PC-3 (cell line): ENCODE measurements at regions of chr3 and their contacts with region 1.

Region 1: GRCh38 chr3:46488735-46489361 is 8.9 kb upstream of the RTP3 start:
- DNase-seq: peak; percentile 98
- ATAC-seq: peak; percentile 96
- H3K4me3 ChIP-seq: no peak overlapping the region; the same call in 1 of the 2 replicates
- H3K27ac ChIP-seq: no peak overlapping the region
- H3K4me1 ChIP-seq: peaks cover 14% of the 10 kb centered on the region
- H3K27me3 ChIP-seq: no peaks in the 10 kb centered on the region
- CTCF ChIP-seq: peak; percentile 100

Region 2: GRCh38 chr3:46423588-46423987 is 65.3 kb before region 1 on chr3:
- CTCF ChIA-PET with region 1: interaction called, 3 read pairs
- POLR2A ChIA-PET with region 1: no interaction called
- intact Hi-C with region 1: loop called (anchors 2 kb)
- DNase-seq: peak; percentile 73
- ATAC-seq: no peak
- H3K4me3 ChIP-seq: no peak overlapping the region
- H3K27ac ChIP-seq: peak overlapping the region; percentile 59
- H3K4me1 ChIP-seq: peaks cover 47% of the 10 kb centered on the region
- H3K27me3 ChIP-seq: no peaks in the 10 kb centered on the region
- CTCF ChIP-seq: no peak

Region 3: DNA sequence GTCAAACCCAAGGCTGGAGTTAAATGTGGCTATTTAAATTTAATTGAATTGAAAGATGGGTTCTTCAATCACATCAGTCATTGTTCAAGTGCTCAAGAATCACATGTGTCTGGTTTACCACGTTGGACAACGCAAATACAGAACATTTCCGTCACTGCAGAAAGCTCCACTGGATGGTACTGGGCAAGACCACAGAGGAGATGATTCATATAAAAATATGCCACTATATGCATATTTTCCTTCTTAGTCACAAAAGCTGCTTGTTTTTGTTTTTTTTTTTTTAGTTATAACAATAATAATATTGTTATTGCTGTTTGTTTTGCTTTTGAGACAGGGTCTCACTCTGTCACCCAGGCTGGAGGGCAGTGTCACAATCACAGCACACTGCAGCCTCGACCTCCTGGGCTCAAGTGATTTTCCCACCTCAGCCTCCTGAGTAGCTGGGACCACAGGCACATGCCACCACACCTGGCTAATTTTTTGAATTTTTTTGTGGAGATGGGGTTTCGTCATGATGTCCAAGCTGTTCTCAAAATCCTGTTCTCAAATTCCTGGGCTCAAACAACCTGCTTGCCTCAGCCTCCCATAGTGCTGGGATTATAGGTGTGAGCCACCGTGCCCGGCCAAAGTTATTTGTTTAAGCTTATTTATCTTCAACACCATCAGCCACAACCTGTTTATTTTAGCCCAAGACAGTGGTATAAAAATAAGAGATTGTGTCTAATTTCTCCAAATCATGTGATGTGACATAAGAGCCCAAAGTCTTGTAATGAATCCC is 28.4 kb after region 1 on chr3:
- CTCF ChIA-PET with region 1: interaction called, 9 read pairs
- POLR2A ChIA-PET with region 1: no interaction called
- intact Hi-C with region 1: loop called (anchors 1 kb)
- DNase-seq: peak; percentile 97
- ATAC-seq: peak; percentile 98
- H3K4me3 ChIP-seq: peak overlapping the region; percentile 29; the same call in 1 of the 2 replicates
- H3K27ac ChIP-seq: peak overlapping the region; percentile 90
- H3K4me1 ChIP-seq: peaks cover 23% of the 10 kb centered on the region
- H3K27me3 ChIP-seq: no peaks in the 10 kb centered on the region
- CTCF ChIP-seq: no peak

Region 4: DNA sequence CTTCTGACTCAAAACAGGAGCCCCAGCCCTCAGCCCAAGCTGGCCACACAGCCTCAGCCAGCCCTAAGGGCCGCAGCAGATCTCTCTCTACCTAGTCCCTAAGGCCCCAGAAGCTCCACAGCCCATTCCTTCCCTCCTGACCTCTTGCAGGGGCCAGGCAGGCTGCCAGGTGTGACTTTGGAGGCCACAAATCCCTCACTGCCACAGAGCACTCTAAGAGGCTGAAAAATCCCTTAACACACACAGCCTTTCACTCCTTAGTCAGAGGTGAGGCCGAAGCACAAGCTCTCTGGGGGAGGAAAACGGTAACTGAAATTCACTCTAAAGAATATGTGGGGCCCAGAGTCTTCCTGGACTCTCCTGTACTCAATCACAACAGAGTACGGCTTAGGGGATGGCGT is 54.0 kb after region 1 on chr3:
- CTCF ChIA-PET with region 1: interaction called, 10 read pairs
- POLR2A ChIA-PET with region 1: interaction called, 3 read pairs
- intact Hi-C with region 1: no loop called
- DNase-seq: peak; percentile 28
- ATAC-seq: peak; percentile 12; the same call in 1 of the 2 replicates
- H3K4me3 ChIP-seq: no peak overlapping the region
- H3K27ac ChIP-seq: peak overlapping the region; percentile 14; the same call in 1 of the 2 replicates
- H3K4me1 ChIP-seq: peaks cover 28% of the 10 kb centered on the region
- H3K27me3 ChIP-seq: no peaks in the 10 kb centered on the region
- CTCF ChIP-seq: no peak

Region 5: GRCh38 chr3:46551615-46552014 is 62.8 kb after region 1 on chr3:
- CTCF ChIA-PET with region 1: interaction called, 14 read pairs
- POLR2A ChIA-PET with region 1: no interaction called
- intact Hi-C with region 1: no loop called
- DNase-seq: peak; percentile 59
- ATAC-seq: peak; percentile 70
- H3K4me3 ChIP-seq: no peak overlapping the region
- H3K27ac ChIP-seq: no peak overlapping the region; the same call in 1 of the 2 replicates
- H3K4me1 ChIP-seq: peaks cover 35% of the 10 kb centered on the region
- H3K27me3 ChIP-seq: no peaks in the 10 kb centered on the region
- CTCF ChIP-seq: no peak

Region 6: DNA sequence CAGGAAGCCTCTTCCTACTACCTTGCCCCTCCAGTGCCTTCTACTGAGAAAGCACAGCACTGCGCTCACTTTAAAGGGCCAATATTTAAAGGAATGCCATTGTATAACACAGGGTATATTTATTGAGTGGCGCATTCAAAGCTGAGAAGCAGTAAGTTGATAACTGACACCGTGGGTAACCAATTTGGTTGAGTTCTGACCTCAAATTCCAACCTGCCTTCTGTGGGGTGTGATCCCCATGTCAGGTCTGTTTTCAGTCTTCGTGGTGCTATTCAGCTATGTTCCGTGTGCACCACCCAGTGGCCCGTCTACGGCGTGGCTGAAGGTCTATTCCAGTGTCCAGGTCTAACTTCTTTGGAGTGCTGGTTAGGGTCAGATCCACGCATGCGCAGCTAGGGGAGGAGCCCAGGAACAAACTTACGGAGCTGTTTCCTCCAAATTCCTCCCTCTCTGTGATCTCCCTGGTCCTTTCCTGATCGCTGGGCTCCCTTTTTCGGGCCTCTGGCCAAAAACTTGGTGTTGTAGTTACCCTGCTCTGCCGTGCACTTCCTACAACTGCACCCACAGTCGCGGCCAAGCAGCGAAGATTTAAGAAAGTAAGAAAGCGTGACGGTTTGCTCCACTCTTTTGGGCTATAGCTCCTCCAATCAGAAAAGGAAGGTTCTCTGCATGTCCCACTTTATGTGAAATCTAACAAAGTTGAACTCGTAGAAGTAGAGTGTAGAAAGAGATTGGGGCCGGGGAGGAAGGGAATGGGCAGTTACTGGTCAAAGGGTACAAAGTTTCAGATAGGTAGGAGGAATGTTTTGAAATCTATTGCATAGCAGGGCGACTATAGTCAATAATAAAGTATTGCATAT is 69.6 kb after region 1 on chr3:
- CTCF ChIA-PET with region 1: interaction called, 112 read pairs
- POLR2A ChIA-PET with region 1: no interaction called
- intact Hi-C with region 1: loop called (anchors 1 kb)
- DNase-seq: peak; percentile 98
- ATAC-seq: peak; percentile 94
- H3K4me3 ChIP-seq: peak overlapping the region; percentile 71
- H3K27ac ChIP-seq: peak overlapping the region; percentile 40
- H3K4me1 ChIP-seq: peaks cover 33% of the 10 kb centered on the region
- H3K27me3 ChIP-seq: no peaks in the 10 kb centered on the region
- CTCF ChIP-seq: peak; percentile 96

Region 7: GRCh38 chr3:46629551-46630517 is 141.0 kb after region 1 on chr3:
- CTCF ChIA-PET with region 1: interaction called, 14 read pairs
- POLR2A ChIA-PET with region 1: no interaction called
- intact Hi-C with region 1: loop called (anchors 1 kb)
- DNase-seq: peak; percentile 79
- ATAC-seq: peak; percentile 96
- H3K4me3 ChIP-seq: no peak overlapping the region
- H3K27ac ChIP-seq: no peak overlapping the region
- H3K4me1 ChIP-seq: no peaks in the 10 kb centered on the region; the same call in 1 of the 2 replicates
- H3K27me3 ChIP-seq: no peaks in the 10 kb centered on the region
- CTCF ChIP-seq: peak; percentile 97

Region 8: DNA sequence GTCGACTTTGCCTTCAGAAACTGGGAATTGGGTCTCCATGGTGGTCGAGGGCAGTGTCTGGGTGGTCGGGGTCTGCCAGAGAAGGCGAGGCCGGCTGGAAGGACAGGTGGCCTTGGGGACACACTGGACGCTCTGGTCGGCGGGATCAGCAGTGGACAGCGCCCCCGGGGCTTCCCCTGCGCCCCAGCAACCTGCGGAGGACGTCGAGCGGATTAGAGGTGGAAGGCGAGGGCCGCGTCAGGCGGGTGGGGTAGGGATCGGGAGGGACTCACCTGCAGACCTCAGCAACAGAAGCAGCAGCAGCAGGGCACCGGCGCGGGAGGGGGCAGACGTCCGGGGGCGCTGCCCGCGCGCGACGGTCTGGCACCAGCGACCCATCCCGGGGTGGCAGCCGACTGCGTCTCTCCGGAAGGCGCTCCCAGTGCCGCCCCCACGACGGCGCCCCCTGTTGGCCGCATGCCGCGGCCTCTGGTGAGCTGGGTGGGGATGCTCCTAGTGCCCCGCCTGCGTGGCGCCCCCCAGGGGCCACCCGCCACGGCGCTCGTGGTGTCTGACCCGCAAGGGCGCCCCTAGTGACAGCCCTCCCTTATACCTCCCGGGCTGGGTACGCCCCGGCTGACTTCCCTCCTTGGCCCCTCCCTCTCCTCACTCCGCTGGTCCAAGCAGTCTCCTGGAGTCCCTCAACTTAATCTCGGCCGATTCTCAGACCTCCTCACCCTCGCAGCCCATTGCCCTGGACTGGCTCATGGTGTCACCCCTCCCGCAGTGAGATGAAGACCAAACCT is 228.8 kb after region 1 on chr3 and contains the start of gene PRSS50:
- CTCF ChIA-PET with region 1: no interaction called
- POLR2A ChIA-PET with region 1: no interaction called
- intact Hi-C with region 1: no loop called
- DNase-seq: no peak
- ATAC-seq: no peak
- H3K4me3 ChIP-seq: no peak within 1 kb of the TSS
- H3K27ac ChIP-seq: no peak within 1 kb of the TSS
- H3K4me1 ChIP-seq: no peaks in the 10 kb centered on the region
- H3K27me3 ChIP-seq: no peaks in the 10 kb centered on the region
- CTCF ChIP-seq: peak; percentile 54
- total RNA-seq, gene PRSS50: not detected in 2 replicates